Mucosa of descending colon (tissue), 3 donors: ENCODE measurements at regions of chr7 and their contacts with region 1.

Region 1: GRCh38 chr7:153858355-153858754 is 193.8 kb upstream of the DPP6 start:
- DNase-seq: no peak
- ATAC-seq: no peak
- H3K4me3 ChIP-seq: no peak overlapping the region
- H3K4me1 ChIP-seq: no peaks in the 10 kb centered on the region
- CTCF ChIP-seq: no peak

Region 2: DNA sequence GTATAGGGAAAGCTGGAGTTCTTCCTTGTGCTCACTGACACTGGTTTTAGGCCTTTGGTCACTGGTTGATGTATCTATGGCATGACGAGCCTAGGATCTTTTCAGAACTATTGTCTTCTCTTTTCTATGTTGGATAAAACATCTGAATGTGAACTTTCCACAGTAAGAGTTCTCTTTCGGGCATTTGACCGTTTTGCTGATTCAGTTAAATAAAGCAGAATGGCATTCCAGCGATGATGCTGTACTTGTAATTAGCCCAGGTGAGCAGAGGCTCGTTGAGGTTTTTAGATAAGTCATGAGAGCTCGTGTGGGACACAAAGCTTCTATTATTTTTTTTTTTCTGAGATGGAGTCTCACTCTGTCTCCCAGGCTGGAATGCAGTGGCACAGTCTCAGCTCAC is 33.6 kb after region 1 on chr7:
- intact Hi-C with region 1: loop called in 1 of 2 experiments (anchors 2 kb)
- DNase-seq: no peak
- ATAC-seq: no peak
- H3K4me3 ChIP-seq: no peak overlapping the region
- H3K4me1 ChIP-seq: no peaks in the 10 kb centered on the region
- CTCF ChIP-seq: no peak